Activated CD4-positive, alpha-beta memory T cell treated with anti-CD3 and anti-CD28 coated beads, Interleukin-2, amount 10 ng/mL, durations not matched to agents 7 days and 5 days (primary cell): ENCODE measurements at regions of chr5 and their contacts with region 1.

Region 1: DNA sequence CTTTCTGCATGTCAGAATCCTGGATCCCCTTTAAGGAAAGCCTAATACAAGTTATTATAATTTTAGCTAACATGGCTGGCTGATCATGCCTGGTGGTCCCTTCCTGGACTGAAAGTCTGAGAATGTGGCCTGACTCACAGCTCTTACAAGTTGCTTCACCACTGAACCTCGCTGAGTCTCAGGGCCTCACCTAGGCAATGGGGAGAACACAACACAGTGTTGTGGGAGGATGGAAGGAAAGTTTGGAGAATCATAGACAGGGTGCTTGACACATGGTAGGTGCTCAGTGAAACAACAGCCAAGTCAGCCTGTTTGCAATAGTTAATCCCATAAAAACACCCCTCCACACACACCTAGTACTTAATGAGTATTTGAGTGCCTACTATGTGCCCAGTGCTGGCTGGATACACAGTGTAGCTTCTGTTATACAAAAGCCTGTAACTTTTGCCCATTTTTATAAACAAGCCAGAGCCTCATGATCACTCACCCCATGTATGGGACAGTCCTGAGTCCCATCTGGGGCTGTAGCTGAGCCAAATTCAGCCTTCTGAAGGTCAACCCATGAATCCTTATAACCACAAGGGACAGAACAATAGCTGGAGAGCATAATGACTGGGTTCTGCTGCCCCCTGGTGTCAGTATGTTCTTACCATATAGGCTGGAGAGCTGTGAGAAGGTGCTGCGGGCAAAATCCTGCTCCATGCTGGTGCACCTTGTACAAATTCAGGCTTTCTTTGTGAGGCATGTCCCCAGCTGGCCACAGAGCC is 3.9 kb downstream of the ACSL6 start:
- DNase-seq: peak; percentile 80
- H3K4me3 Mint-ChIP-seq: no peak overlapping the region
- H3K27ac Mint-ChIP-seq: no peak overlapping the region
- H3K4me1 Mint-ChIP-seq: peaks cover 20% of the 10 kb centered on the region
- H3K27me3 Mint-ChIP-seq: peaks cover 41% of the 10 kb centered on the region

Region 2: GRCh38 chr5:131589510-131590348 is 417.9 kb before region 1 on chr5:
- CTCF ChIA-PET with region 1: interaction called, 163 read pairs
- POLR2A ChIA-PET with region 1: interaction called, 10 read pairs
- DNase-seq: peak; percentile 23
- H3K4me3 Mint-ChIP-seq: no peak overlapping the region
- H3K27ac Mint-ChIP-seq: no peak overlapping the region
- H3K4me1 Mint-ChIP-seq: peaks cover 29% of the 10 kb centered on the region
- H3K27me3 Mint-ChIP-seq: no peaks in the 10 kb centered on the region

Region 3: GRCh38 chr5:131758520-131758900 is 249.1 kb before region 1 on chr5:
- CTCF ChIA-PET with region 1: no interaction called
- POLR2A ChIA-PET with region 1: no interaction called
- DNase-seq: no peak
- H3K4me3 Mint-ChIP-seq: no peak overlapping the region
- H3K27ac Mint-ChIP-seq: no peak overlapping the region
- H3K4me1 Mint-ChIP-seq: peaks cover 17% of the 10 kb centered on the region
- H3K27me3 Mint-ChIP-seq: no peaks in the 10 kb centered on the region

Region 4: DNA sequence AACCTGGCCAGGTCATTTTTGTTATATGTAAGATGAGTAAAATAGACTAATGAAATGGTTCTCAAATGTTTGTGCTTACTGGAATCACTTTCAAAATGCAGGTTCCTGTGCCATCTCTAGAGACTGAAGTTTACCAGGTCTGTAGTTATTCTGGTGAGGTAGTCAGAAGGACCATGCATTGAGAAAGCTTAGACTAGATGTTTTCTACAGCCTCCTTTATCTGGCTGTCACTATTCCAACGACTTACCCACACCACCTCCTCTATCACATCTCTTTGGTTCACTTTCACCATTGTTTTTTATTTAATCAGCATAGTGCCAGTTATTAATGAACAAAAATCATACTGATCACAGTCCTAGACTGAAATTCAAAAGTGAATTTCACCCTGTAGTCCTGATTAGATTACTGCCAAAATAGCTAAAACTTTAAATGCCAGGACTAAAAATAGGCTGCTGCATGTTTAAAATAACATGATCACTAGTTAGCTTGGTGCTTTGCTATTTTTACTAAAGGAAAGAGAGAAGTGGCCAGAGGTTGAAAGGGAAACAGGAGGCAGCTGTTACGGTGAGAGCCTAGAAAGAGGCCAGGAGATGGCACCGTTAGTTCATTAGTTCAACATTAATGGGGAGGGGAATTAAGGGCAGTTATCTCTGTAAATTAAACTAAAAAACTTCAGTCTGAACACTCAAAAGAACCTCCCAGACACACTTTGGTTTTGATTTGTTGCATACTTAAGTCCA is 196.9 kb before region 1 on chr5:
- CTCF ChIA-PET with region 1: interaction called, 53 read pairs
- POLR2A ChIA-PET with region 1: interaction called, 6 read pairs
- DNase-seq: no peak
- H3K4me3 Mint-ChIP-seq: no peak overlapping the region
- H3K27ac Mint-ChIP-seq: no peak overlapping the region
- H3K4me1 Mint-ChIP-seq: no peaks in the 10 kb centered on the region
- H3K27me3 Mint-ChIP-seq: peaks cover 2% of the 10 kb centered on the region

Region 5: GRCh38 chr5:131974956-131975726 is 32.4 kb before region 1 on chr5:
- CTCF ChIA-PET with region 1: no interaction called
- POLR2A ChIA-PET with region 1: no interaction called
- DNase-seq: peak; percentile 39
- H3K4me3 Mint-ChIP-seq: peak overlapping the region; percentile 69
- H3K27ac Mint-ChIP-seq: peak overlapping the region; percentile 89
- H3K4me1 Mint-ChIP-seq: peaks cover 26% of the 10 kb centered on the region
- H3K27me3 Mint-ChIP-seq: no peaks in the 10 kb centered on the region

Region 6: DNA sequence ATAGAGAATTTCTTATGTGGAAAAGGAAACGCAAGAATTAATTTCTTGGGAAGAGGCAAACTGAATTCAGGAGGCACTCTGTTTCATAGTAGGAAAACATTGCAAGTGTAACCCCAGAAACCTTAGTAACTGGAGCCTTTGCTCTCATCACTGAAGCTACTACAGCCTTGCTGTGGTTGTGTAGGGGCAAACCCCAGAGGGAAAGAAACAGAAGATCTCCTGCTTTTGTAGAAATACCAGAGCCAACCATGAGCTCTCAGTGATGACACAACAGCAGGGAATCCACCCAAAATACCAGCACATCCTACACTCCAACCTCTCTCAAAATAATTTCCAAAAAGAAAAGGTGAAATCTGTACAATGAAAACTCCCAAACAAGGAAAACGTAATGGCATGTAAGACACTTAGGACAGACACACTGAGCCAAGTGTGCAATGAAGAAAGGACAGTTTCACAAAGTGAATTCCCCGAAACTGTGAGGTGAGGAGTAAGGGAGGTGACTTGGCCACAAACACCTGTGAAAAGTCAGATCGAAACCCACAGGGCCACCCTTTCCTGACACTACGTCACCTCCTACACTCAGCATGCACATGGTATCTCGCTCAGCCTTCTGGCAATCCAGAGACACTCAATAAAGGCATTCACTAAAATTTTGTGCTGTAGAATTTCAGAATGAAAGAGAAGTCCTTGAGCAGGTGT is 12.4 kb after region 1 on chr5:
- CTCF ChIA-PET with region 1: interaction called, 20 read pairs
- POLR2A ChIA-PET with region 1: interaction called, 6 read pairs
- DNase-seq: peak; percentile 89
- H3K4me3 Mint-ChIP-seq: peak overlapping the region; percentile 54
- H3K27ac Mint-ChIP-seq: peak overlapping the region; percentile 96
- H3K4me1 Mint-ChIP-seq: peaks cover 58% of the 10 kb centered on the region
- H3K27me3 Mint-ChIP-seq: peaks cover 43% of the 10 kb centered on the region

Region 7: DNA sequence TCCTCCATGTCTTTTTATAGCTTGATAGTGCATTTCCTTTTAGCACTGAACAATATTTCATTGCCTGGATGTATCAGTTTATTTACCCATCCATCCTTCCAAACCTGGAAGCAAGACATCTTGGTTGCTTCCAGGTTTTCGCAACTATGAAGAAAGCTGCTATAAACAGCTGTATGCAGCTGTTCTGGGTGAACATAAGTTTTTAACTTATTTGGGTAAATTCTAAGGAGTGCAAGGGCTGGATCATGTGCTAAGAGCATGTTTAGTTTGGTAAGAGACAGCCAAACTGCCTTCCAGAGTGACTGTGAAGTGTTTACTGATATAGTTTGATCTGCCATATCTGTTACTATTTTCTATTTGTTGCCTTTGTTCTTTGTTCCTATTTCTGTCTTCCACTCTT is 124.6 kb after region 1 on chr5:
- CTCF ChIA-PET with region 1: no interaction called
- POLR2A ChIA-PET with region 1: no interaction called
- DNase-seq: no peak
- H3K4me3 Mint-ChIP-seq: no peak overlapping the region
- H3K27ac Mint-ChIP-seq: no peak overlapping the region
- H3K4me1 Mint-ChIP-seq: peaks cover 3% of the 10 kb centered on the region
- H3K27me3 Mint-ChIP-seq: peaks cover 9% of the 10 kb centered on the region

Region 8: GRCh38 chr5:132272311-132273210 is 265.0 kb after region 1 on chr5:
- CTCF ChIA-PET with region 1: no interaction called
- POLR2A ChIA-PET with region 1: no interaction called
- DNase-seq: peak; percentile 65
- H3K4me3 Mint-ChIP-seq: no peak overlapping the region
- H3K27ac Mint-ChIP-seq: no peak overlapping the region
- H3K4me1 Mint-ChIP-seq: peaks cover 10% of the 10 kb centered on the region
- H3K27me3 Mint-ChIP-seq: peaks cover 18% of the 10 kb centered on the region